ENCODE measurements at regions of chr20 and their contacts with region 1.

Region 1: DNA sequence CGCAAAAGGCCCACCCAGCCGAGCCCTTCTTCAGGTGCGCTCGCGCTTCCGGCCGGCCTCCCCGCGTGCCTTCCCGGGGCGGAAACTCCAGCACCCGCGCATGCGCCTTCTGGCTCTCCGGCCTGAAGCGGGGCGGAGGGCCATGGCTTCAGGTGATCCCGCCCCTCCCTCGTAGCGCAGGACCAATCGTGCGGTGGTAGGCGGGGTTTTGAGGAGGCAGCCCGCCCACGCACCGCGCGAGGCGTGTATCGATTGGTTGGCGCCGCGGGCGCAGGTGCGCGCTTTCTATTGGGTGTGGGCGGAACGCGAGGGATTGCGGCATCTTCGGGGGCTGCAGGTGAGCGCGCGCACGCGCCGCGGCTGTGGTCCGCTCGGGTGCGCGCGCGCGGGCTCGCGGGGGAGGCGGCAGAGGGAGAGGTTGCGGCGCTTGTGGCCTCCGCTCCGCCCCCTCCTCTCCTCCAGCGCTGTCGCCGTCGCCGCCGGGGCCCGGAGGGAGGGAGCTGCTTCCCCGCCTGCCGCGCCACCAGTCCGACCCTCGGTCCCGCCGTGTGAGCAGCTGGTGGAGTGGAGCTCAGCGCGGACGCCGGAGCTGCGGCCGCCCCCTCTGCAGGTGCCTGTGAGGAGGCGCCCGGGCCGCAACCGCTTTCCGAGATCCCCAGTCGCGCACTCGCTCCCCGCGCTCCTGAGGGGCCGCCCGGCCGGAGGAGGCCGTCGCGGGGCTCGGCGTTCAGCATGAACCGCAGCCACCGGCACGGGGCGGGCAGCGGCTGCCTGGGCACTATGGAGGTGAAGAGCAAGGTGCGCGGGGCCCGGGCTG is at the start of gene PARD6B:
- DNase-seq: peak; percentile 100
- ATAC-seq: peak; percentile 94
- H3K4me3 ChIP-seq: peak within 1 kb of the TSS; percentile 47 to 81 (median 71)
- H3K4me3 Mint-ChIP-seq: peak within 1 kb of the TSS; percentile 91
- H3K27ac ChIP-seq: peak within 1 kb of the TSS; percentile 39 to 80
- H3K27ac Mint-ChIP-seq: peak within 1 kb of the TSS; percentile 91
- H3K4me1 ChIP-seq: peaks cover 15% of the 10 kb centered on the region in 2 donors
- H3K4me1 Mint-ChIP-seq: peaks cover 21% of the 10 kb centered on the region
- H3K27me3 ChIP-seq: no peaks in the 10 kb centered on the region
- H3K27me3 Mint-ChIP-seq: peaks cover 4% of the 10 kb centered on the region
- CTCF ChIP-seq: no peak
- total RNA-seq, gene PARD6B: 6.0 and 10.1 TPM in 2 replicates

Region 2: DNA sequence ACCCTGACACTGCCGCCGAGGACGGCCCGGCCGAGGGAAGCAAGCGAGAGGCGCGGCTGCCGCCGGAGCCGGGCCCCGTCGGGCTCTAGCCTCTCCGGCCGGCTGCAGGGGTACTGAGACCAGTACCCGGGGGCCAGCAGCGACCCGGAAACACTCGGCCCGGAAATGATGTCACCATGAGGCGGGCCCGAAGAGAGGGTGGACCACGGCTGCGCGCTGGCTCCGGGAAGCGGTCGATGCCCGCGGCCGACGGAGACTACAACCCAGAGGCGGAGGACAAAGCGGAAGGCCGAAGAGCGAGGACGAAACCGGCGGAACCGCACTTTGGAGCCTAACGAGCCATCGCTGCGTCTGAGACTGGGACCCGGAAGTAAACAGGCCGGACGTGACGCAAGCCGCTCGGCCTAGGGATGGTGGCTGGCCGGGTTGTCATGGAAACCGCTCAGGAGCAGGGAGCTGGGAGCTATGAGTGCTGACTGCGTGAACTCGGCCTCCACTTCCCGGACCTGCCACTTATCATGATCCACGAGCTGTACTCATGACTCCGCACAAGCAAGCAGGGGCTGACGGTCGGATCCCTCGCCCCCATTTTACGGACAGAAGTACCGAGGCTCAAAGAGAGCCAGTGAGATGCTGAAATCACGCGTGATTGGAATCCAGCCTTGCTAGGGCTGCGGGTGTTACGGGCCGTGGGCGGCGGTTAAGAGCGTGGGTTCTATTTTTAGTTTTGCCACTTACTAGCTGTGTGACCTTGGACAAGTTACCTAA is 815.7 kb before region 1 on chr20 and contains the start of gene SPATA2:
- CTCF ChIA-PET with region 1: no interaction called
- POLR2A ChIA-PET with region 1: no interaction called
- intact Hi-C with region 1: loop called (anchors 2 kb)
- DNase-seq: peak; percentile 99
- ATAC-seq: peak; percentile 81
- H3K4me3 ChIP-seq: peak within 1 kb of the TSS; percentile 79 to 96 (median 93)
- H3K4me3 Mint-ChIP-seq: peak within 1 kb of the TSS; percentile 99
- H3K27ac ChIP-seq: peak within 1 kb of the TSS; percentile 97 to 99
- H3K27ac Mint-ChIP-seq: peak within 1 kb of the TSS; percentile 100
- H3K4me1 ChIP-seq: peaks cover 12 to 26% of the 10 kb centered on the region in 2 donors
- H3K4me1 Mint-ChIP-seq: peaks cover 31% of the 10 kb centered on the region
- H3K27me3 ChIP-seq: no peaks in the 10 kb centered on the region
- H3K27me3 Mint-ChIP-seq: no peaks in the 10 kb centered on the region
- CTCF ChIP-seq: no peak
- total RNA-seq, gene SPATA2: 10.6 and 10.7 TPM in 2 replicates

Region 3: GRCh38 chr20:50189681-50190582 is 541.3 kb before region 1 on chr20:
- CTCF ChIA-PET with region 1: no interaction called
- POLR2A ChIA-PET with region 1: no interaction called
- intact Hi-C with region 1: loop called (anchors 1 kb)
- DNase-seq: peak; percentile 89
- ATAC-seq: peak; percentile 73
- H3K4me3 ChIP-seq: peak overlapping the region; percentile 15 to 83 (median 68)
- H3K4me3 Mint-ChIP-seq: peak overlapping the region; percentile 72
- H3K27ac ChIP-seq: no peak overlapping the region
- H3K27ac Mint-ChIP-seq: peak overlapping the region; percentile 80
- H3K4me1 ChIP-seq: peaks cover 16 to 28% of the 10 kb centered on the region in 2 donors
- H3K4me1 Mint-ChIP-seq: peaks cover 16% of the 10 kb centered on the region
- H3K27me3 ChIP-seq: peaks cover 0 to 10% (median 2%) of the 10 kb centered on the region in 4 experiments
- H3K27me3 Mint-ChIP-seq: peaks cover 11% of the 10 kb centered on the region
- CTCF ChIP-seq: peak; percentile 75

Region 4: GRCh38 chr20:50498081-50498776 is 233.0 kb before region 1 on chr20:
- CTCF ChIA-PET with region 1: no interaction called
- POLR2A ChIA-PET with region 1: no interaction called
- intact Hi-C with region 1: loop called (anchors 2 kb)
- DNase-seq: peak; percentile 73
- ATAC-seq: peak; percentile 77
- H3K4me3 ChIP-seq: no peak overlapping the region
- H3K4me3 Mint-ChIP-seq: peak overlapping the region; percentile 38
- H3K27ac ChIP-seq: peak overlapping the region; percentile 27 to 60
- H3K27ac Mint-ChIP-seq: peak overlapping the region; percentile 90
- H3K4me1 ChIP-seq: peaks cover 0 to 21% of the 10 kb centered on the region in 2 donors
- H3K4me1 Mint-ChIP-seq: peaks cover 41% of the 10 kb centered on the region
- H3K27me3 ChIP-seq: no peaks in the 10 kb centered on the region
- H3K27me3 Mint-ChIP-seq: no peaks in the 10 kb centered on the region
- CTCF ChIP-seq: no peak

Region 5: GRCh38 chr20:50610221-50610620 is 121.0 kb before region 1 on chr20:
- CTCF ChIA-PET with region 1: no interaction called
- POLR2A ChIA-PET with region 1: no interaction called
- intact Hi-C with region 1: no loop called
- DNase-seq: no peak
- ATAC-seq: no peak
- H3K4me3 ChIP-seq: no peak overlapping the region
- H3K4me3 Mint-ChIP-seq: no peak overlapping the region
- H3K27ac ChIP-seq: no peak overlapping the region
- H3K27ac Mint-ChIP-seq: no peak overlapping the region
- H3K4me1 ChIP-seq: no peaks in the 10 kb centered on the region
- H3K4me1 Mint-ChIP-seq: no peaks in the 10 kb centered on the region
- H3K27me3 ChIP-seq: no peaks in the 10 kb centered on the region
- H3K27me3 Mint-ChIP-seq: no peaks in the 10 kb centered on the region
- CTCF ChIP-seq: no peak

Region 6: DNA sequence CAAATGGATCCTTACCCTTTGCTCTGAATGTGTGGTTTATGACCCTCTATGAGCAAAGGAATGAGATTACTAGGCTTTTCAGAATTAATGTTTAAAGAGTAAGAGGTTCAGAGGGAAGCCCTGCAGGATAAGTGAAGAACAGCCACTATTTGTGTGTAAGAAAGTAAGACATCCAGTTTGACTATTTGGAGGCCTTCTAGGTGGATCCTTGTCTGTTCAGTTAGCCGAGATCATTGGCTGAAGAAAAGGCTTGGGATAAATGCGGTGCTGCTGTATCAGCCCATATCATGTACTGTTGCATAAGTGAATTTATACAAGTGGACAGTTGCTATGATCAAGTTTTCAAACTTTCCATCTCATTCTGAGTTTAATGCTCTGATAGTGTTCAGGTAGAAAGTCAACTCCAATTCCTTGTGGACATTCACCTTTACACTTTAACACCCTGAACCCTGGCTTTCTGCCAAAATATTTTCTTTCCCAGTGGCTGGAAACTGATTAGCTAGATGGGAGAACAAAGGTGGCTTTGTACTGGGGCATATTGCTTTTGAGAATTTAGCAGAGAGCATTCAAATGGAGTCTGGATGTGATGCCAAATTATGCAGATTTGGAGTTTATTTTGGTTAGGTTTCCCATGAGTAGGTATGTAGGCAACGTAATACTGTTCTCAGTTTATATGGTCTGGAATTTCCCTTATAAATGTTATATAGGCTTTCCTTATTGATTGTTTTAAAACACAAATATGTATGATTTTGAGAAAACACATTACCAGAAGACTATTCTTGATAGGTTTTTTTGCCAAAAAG is 15.1 kb after region 1 on chr20:
- CTCF ChIA-PET with region 1: interaction called, 23 read pairs
- POLR2A ChIA-PET with region 1: no interaction called
- intact Hi-C with region 1: loop called (anchors 1 kb)
- DNase-seq: no peak
- ATAC-seq: no peak
- H3K4me3 ChIP-seq: no peak overlapping the region
- H3K4me3 Mint-ChIP-seq: no peak overlapping the region
- H3K27ac ChIP-seq: no peak overlapping the region
- H3K27ac Mint-ChIP-seq: no peak overlapping the region
- H3K4me1 ChIP-seq: peaks cover 0 to 3% of the 10 kb centered on the region in 2 donors
- H3K4me1 Mint-ChIP-seq: peaks cover 6% of the 10 kb centered on the region
- H3K27me3 ChIP-seq: no peaks in the 10 kb centered on the region
- H3K27me3 Mint-ChIP-seq: no peaks in the 10 kb centered on the region
- CTCF ChIP-seq: no peak

Region 7: DNA sequence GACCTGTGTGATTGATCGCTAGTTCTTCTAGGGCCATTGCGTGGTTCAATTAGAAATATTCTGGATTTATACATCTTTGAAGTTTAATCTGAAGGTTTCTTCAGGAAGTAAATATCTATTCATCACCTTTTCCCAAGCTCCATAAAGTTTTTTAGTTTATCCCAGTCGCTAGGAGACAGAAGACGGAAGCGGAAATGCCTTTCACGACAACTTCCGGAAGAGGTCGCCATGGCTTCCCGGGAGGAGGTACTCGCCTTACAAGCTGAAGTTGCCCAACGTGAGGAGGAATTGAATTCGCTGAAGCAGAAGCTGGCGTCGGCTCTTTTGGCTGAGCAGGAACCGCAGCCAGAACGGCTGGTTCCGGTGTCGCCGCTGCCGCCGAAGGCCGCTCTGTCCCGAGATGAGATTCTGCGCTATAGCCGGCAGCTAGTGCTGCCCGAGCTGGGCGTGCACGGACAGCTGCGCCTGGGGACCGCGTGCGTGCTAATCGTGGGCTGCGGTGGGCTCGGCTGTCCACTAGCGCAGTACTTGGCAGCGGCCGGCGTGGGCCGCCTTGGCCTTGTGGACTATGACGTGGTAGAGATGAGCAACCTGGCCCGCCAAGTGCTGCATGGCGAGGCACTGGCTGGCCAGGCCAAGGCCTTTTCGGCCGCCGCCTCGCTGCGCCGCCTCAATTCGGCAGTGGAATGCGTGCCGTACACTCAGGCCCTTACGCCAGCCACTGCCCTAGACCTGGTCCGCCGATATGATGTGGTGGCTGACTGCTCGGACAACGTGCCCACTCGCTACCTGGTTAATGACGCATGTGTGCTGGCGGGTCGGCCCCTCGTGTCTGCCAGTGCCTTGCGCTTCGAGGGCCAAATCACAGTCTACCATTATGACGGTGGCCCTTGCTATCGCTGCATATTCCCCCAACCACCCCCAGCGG is 227.6 kb after region 1 on chr20 and contains the start of gene MOCS3:
- CTCF ChIA-PET with region 1: no interaction called
- POLR2A ChIA-PET with region 1: no interaction called
- intact Hi-C with region 1: loop called (anchors 1 kb)
- DNase-seq: peak; percentile 95
- ATAC-seq: peak; percentile 80
- H3K4me3 ChIP-seq: peak within 1 kb of the TSS; percentile 78 to 99 (median 86)
- H3K4me3 Mint-ChIP-seq: peak within 1 kb of the TSS; percentile 98
- H3K27ac ChIP-seq: peak within 1 kb of the TSS; percentile 81 to 99
- H3K27ac Mint-ChIP-seq: peak within 1 kb of the TSS; percentile 99
- H3K4me1 ChIP-seq: peaks cover 24 to 26% of the 10 kb centered on the region in 2 donors
- H3K4me1 Mint-ChIP-seq: peaks cover 40% of the 10 kb centered on the region
- H3K27me3 ChIP-seq: no peaks in the 10 kb centered on the region
- H3K27me3 Mint-ChIP-seq: no peaks in the 10 kb centered on the region
- CTCF ChIP-seq: no peak
- total RNA-seq, gene MOCS3: 7.6 and 7.9 TPM in 2 replicates

Region 8: GRCh38 chr20:52191132-52191915 is 1460.1 kb after region 1 on chr20 and contains the start of gene ZFP64:
- CTCF ChIA-PET with region 1: no interaction called
- POLR2A ChIA-PET with region 1: no interaction called
- intact Hi-C with region 1: loop called (anchors 5 kb)
- DNase-seq: peak; percentile 86
- ATAC-seq: peak; percentile 78
- H3K4me3 ChIP-seq: peak within 1 kb of the TSS; percentile 56 to 90 (median 82)
- H3K4me3 Mint-ChIP-seq: peak within 1 kb of the TSS; percentile 97
- H3K27ac ChIP-seq: peak within 1 kb of the TSS; percentile 61 to 85
- H3K27ac Mint-ChIP-seq: peak within 1 kb of the TSS; percentile 95
- H3K4me1 ChIP-seq: peaks cover 8 to 13% of the 10 kb centered on the region in 2 donors
- H3K4me1 Mint-ChIP-seq: peaks cover 16% of the 10 kb centered on the region
- H3K27me3 ChIP-seq: no peaks in the 10 kb centered on the region
- H3K27me3 Mint-ChIP-seq: no peaks in the 10 kb centered on the region
- CTCF ChIP-seq: peak; percentile 68
- total RNA-seq, gene ZFP64: 15.1 and 16.8 TPM in 2 replicates